ENCODE measurements at regions of chr1 and their contacts with region 1.

Region 1: DNA sequence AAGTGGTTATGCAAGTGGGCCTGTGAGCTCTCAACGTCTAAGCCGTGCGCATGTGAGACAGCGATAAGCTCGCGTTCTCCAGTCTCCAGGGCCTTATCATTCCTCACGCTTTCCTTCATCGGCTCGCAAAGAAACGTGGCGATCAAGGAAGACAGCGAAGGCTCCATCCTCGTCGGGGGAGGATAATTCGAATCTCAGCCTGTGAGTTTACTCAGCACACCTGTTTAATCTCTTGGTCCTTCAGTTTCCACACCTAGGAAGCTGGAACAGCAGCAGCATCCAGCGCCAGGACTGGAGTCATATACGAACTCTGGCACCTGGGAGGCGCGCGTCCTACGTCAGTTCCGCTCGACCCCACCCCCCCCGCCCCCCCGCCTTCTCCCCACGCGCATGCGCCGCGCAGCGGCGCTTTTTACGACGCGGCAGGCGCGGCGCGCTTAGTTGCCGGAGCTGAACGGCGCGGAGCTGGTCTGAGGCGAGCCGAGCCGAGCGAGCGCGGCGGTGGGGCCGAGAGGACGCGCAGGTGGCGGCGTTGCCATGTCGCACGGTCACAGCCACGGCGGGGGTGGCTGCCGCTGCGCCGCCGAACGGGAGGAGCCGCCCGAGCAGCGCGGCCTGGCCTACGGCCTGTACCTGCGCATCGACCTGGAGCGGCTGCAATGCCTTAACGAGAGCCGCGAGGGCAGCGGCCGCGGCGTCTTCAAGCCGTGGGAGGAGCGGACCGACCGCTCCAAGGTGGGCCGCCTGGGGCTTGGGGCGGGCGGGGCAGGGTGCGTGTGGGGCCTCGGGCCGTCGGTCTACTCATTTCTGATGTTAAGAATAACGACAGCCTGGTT is at the start of gene PITHD1:
- DNase-seq: peak; percentile 83
- ATAC-seq: peak; percentile 86
- H3K4me3 ChIP-seq: peak within 1 kb of the TSS; percentile 61 to 85 (median 82)
- H3K27ac ChIP-seq: peak within 1 kb of the TSS; percentile 91
- H3K4me1 ChIP-seq: peaks cover 59% of the 10 kb centered on the region
- H3K27me3 ChIP-seq: no peaks in the 10 kb centered on the region; a peak in 1 of 5 replicates
- CTCF ChIP-seq: no peak
- EP300 ChIP-seq: no peak
- POLR2A ChIP-seq: peak; percentile 84 to 99
- RAD21 ChIP-seq: peak; percentile 28; the same call in 1 of the 2 replicates
- total RNA-seq, gene PITHD1: 37.3 and 44.9 TPM in 2 replicates

Region 2: GRCh38 chr1:23743287-23744052 is 34.7 kb before region 1 on chr1 and contains the start of gene ELOA:
- CTCF ChIA-PET with region 1: no interaction called
- POLR2A ChIA-PET with region 1: interaction called, 18 read pairs
- in situ Hi-C with region 1: no loop called
- intact Hi-C with region 1: no loop called
- DNase-seq: peak; percentile 35
- ATAC-seq: peak; percentile 93
- H3K4me3 ChIP-seq: peak within 1 kb of the TSS; percentile 81 to 98 (median 93)
- H3K27ac ChIP-seq: peak within 1 kb of the TSS; percentile 79
- H3K4me1 ChIP-seq: peaks cover 37% of the 10 kb centered on the region
- H3K27me3 ChIP-seq: no peaks in the 10 kb centered on the region; a peak in 1 of 5 replicates
- CTCF ChIP-seq: no peak; the same call in 1 of the 2 replicates
- EP300 ChIP-seq: no peak
- POLR2A ChIP-seq: peak; percentile 77 to 95
- RAD21 ChIP-seq: peak; percentile 23; the same call in 1 of the 2 replicates
- total RNA-seq, gene ELOA: 28.5 and 36.3 TPM in 2 replicates

Region 3: GRCh38 chr1:23790696-23791515 is 12.7 kb after region 1 on chr1 and contains the start of gene LYPLA2:
- CTCF ChIA-PET with region 1: no interaction called
- POLR2A ChIA-PET with region 1: interaction called, 154 read pairs
- in situ Hi-C with region 1: no loop called
- intact Hi-C with region 1: no loop called
- DNase-seq: peak; percentile 85
- ATAC-seq: peak; percentile 86
- H3K4me3 ChIP-seq: peak within 1 kb of the TSS; percentile 88 to 98 (median 97)
- H3K27ac ChIP-seq: peak within 1 kb of the TSS; percentile 69
- H3K4me1 ChIP-seq: peaks cover 34% of the 10 kb centered on the region
- H3K27me3 ChIP-seq: no peaks in the 10 kb centered on the region; a peak in 1 of 5 replicates
- CTCF ChIP-seq: 0 out of 2 replicates have a peak, but pooled peaks have one; percentile 10
- EP300 ChIP-seq: no peak
- POLR2A ChIP-seq: peak in 1 of 2 experiments; percentile 47; a peak in 1 of 4 replicates
- RAD21 ChIP-seq: no peak
- total RNA-seq, gene LYPLA2: 73.2 and 90.3 TPM in 2 replicates

Region 4: GRCh38 chr1:23825076-23825761 is 47.0 kb after region 1 on chr1 and contains the start of gene HMGCL:
- CTCF ChIA-PET with region 1: no interaction called
- POLR2A ChIA-PET with region 1: interaction called, 30 read pairs
- in situ Hi-C with region 1: no loop called
- intact Hi-C with region 1: no loop called
- DNase-seq: peak; percentile 80
- ATAC-seq: peak; percentile 94
- H3K4me3 ChIP-seq: peak within 1 kb of the TSS; percentile 90 to 100 (median 99)
- H3K27ac ChIP-seq: peak within 1 kb of the TSS; percentile 99
- H3K4me1 ChIP-seq: peaks cover 24% of the 10 kb centered on the region
- H3K27me3 ChIP-seq: no peaks in the 10 kb centered on the region; a peak in 1 of 5 replicates
- CTCF ChIP-seq: peak; percentile 9; the same call in 1 of the 2 replicates
- EP300 ChIP-seq: 0 out of 4 replicates have a peak, but pooled peaks of 1 of the 2 experiments have one; percentile 35
- POLR2A ChIP-seq: peak; percentile 86 to 95
- RAD21 ChIP-seq: no peak
- total RNA-seq, gene HMGCL: 21.3 and 30.0 TPM in 2 replicates

Region 5: GRCh38 chr1:24385160-24385940 is 607.2 kb after region 1 on chr1:
- CTCF ChIA-PET with region 1: no interaction called
- POLR2A ChIA-PET with region 1: no interaction called
- in situ Hi-C with region 1: no loop called
- intact Hi-C with region 1: no loop called
- DNase-seq: no peak
- ATAC-seq: peak; percentile 71
- H3K4me3 ChIP-seq: no peak overlapping the region
- H3K27ac ChIP-seq: no peak overlapping the region
- H3K4me1 ChIP-seq: peaks cover 18% of the 10 kb centered on the region
- H3K27me3 ChIP-seq: no peaks in the 10 kb centered on the region
- CTCF ChIP-seq: peak; percentile 48
- EP300 ChIP-seq: no peak
- POLR2A ChIP-seq: no peak
- RAD21 ChIP-seq: no peak